ENCODE measurements at regions of chr1 and their contacts with region 1.

Region 1: DNA sequence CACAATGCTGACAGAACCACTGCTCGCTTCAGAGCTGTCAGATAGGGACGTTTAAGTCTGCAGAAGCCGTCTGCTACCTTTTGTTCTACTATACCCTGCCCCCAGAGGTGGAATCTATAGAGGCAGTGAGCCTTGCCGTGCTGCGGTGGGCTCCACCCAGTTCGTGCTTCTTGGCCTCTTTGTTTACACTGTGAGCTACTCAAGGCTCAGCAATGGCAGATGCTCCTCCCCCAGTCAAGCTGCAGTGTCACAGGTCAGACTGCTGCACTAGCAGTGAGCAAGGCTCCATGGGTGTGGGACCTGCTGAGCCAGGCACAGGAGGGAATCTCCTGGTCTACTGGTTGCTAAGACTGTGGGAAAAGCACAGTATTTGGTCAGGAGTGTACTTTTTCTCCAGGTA is 47.1 kb downstream of the LEPR start:
- DNase-seq: peak; percentile 95
- ATAC-seq: peak; percentile 94
- H3K4me3 ChIP-seq: peak overlapping the region in 1 of 3 experiments; percentile 54; a peak in 2 of 6 replicates
- H3K27ac ChIP-seq: peak overlapping the region; percentile 50
- H3K4me1 ChIP-seq: peaks cover 61% of the 10 kb centered on the region
- H3K27me3 ChIP-seq: no peaks in the 10 kb centered on the region
- CTCF ChIP-seq: peak; percentile 57
- EP300 ChIP-seq: peak in 1 of 2 experiments; percentile 75; a peak in 2 of 4 replicates
- POLR2A ChIP-seq: no peak
- RAD21 ChIP-seq: peak; percentile 46

Region 2: DNA sequence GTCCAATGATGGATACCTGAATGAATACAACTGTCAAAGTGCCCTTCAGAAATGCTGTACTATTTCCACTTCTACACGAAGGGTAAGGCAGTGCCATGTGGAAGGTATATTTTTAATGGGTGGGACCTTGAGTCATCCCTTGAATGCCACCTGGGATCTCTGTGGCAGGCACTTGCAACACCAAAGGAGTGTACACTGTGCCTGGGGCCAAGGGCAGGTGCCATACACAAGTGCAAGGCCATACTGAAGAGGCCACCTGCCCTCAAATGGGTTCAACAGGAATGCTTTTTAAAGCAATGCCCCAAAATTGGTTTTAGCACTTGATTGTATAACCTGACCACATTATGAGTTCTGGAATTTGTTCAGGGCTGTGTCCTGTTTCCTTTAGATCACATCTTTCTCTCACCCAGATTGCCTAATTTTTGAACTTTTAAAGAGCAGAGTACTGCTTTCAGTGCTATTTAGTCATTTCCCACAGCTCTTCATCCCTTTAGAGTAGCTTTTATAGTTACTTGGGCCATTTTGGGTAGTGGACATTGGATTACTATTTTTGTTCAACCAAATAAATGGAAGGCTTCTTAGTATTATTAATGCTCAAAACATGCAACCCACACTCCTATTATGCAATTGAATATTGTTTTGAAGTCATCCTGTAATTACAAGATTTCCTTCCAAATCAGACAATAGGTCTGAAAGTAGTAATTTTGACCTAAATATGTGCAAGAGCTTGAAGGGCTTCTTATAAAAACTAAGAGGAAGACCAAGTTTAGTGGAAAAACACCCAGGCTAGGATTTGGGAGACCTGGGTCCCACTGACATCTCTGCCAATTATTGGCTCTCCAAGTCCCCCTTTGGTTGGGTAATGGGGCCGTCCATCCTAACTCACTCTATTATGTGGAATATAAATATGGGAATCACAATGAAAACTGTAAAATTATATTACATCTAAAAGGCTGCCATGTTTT is 10.2 kb after region 1 on chr1:
- CTCF ChIA-PET with region 1: no interaction called
- POLR2A ChIA-PET with region 1: interaction called, 17 read pairs
- in situ Hi-C with region 1: no loop called
- intact Hi-C with region 1: no loop called
- DNase-seq: no peak
- ATAC-seq: no peak
- H3K4me3 ChIP-seq: no peak overlapping the region
- H3K27ac ChIP-seq: peak overlapping the region; percentile 80
- H3K4me1 ChIP-seq: peaks cover 62% of the 10 kb centered on the region
- H3K27me3 ChIP-seq: no peaks in the 10 kb centered on the region
- CTCF ChIP-seq: no peak
- EP300 ChIP-seq: peak in 1 of 2 experiments; percentile 6; a peak in 1 of 4 replicates
- POLR2A ChIP-seq: no peak
- RAD21 ChIP-seq: no peak

Region 3: DNA sequence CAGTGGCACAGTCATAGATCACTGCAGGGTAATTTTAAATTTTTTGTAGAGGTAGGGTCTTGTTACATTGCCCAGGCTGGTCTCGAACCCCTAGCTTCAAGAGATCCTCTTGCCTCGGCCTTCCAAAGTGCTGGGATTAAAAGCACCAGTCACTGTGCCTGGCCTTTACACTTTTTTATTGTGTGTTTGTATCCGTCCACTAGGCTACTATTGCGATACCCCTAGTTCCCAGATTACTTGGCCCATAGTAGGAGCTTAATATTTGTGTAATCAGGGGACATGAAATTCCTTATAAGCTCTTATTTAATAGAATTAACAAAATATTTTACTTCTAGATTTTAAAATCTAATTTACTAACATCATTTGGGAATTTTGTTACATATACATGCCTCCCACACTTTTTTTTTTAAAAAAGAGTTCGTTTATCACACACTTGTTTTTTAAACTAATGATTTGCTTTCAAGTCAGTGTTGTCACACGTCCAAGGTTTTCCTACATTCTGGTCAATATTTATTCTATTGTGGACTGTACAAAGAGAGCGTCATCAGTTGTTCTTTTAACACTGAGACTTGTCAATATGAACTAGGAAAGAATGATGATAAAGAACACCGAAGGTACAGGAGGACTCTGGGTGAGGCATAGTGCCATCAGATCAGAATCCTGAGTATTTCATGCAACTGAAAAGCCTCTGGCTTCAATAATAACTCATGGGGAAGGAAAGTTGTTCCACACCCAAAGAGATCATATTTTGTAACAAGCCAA is 16.6 kb after region 1 on chr1:
- CTCF ChIA-PET with region 1: no interaction called
- POLR2A ChIA-PET with region 1: interaction called, 3 read pairs
- in situ Hi-C with region 1: no loop called
- intact Hi-C with region 1: loop called (anchors 2 kb)
- DNase-seq: peak; percentile 88
- ATAC-seq: peak; percentile 100
- H3K4me3 ChIP-seq: no peak overlapping the region
- H3K27ac ChIP-seq: peak overlapping the region; percentile 70
- H3K4me1 ChIP-seq: peaks cover 32% of the 10 kb centered on the region
- H3K27me3 ChIP-seq: no peaks in the 10 kb centered on the region
- CTCF ChIP-seq: no peak
- EP300 ChIP-seq: peak; percentile 19 to 94; a peak in 2 of 4 replicates
- POLR2A ChIP-seq: no peak
- RAD21 ChIP-seq: no peak